Tibial artery (tissue), 4 donors: ENCODE measurements at regions of chr9 and their contacts with region 1.

Region 1: GRCh38 chr9:127199001-127199791 is 65.4 kb upstream of the GARNL3 start:
- DNase-seq: peak; percentile 83 to 89
- H3K4me3 ChIP-seq: no peak overlapping the region
- H3K27ac ChIP-seq: peak overlapping the region; percentile 1 to 8
- H3K4me1 ChIP-seq: peaks cover 0 to 30% (median 19%) of the 10 kb centered on the region in 4 donors
- H3K27me3 ChIP-seq: no peaks in the 10 kb centered on the region
- CTCF ChIP-seq: peak; percentile 88 to 98

Region 2: GRCh38 chr9:126939821-126940221 is 259.4 kb before region 1 on chr9:
- intact Hi-C with region 1: loop called (anchors 2 kb)
- DNase-seq: no peak
- H3K4me3 ChIP-seq: no peak overlapping the region
- H3K27ac ChIP-seq: no peak overlapping the region
- H3K4me1 ChIP-seq: no peaks in the 10 kb centered on the region
- H3K27me3 ChIP-seq: no peaks in the 10 kb centered on the region
- CTCF ChIP-seq: no peak

Region 3: GRCh38 chr9:127116957-127117356 is 82.2 kb before region 1 on chr9:
- intact Hi-C with region 1: loop called (anchors 5 kb)
- DNase-seq: no peak
- H3K4me3 ChIP-seq: no peak overlapping the region
- H3K27ac ChIP-seq: no peak overlapping the region
- H3K4me1 ChIP-seq: peaks cover 0 to 64% (median 24%) of the 10 kb centered on the region in 4 donors
- H3K27me3 ChIP-seq: no peaks in the 10 kb centered on the region
- CTCF ChIP-seq: no peak

Region 4: DNA sequence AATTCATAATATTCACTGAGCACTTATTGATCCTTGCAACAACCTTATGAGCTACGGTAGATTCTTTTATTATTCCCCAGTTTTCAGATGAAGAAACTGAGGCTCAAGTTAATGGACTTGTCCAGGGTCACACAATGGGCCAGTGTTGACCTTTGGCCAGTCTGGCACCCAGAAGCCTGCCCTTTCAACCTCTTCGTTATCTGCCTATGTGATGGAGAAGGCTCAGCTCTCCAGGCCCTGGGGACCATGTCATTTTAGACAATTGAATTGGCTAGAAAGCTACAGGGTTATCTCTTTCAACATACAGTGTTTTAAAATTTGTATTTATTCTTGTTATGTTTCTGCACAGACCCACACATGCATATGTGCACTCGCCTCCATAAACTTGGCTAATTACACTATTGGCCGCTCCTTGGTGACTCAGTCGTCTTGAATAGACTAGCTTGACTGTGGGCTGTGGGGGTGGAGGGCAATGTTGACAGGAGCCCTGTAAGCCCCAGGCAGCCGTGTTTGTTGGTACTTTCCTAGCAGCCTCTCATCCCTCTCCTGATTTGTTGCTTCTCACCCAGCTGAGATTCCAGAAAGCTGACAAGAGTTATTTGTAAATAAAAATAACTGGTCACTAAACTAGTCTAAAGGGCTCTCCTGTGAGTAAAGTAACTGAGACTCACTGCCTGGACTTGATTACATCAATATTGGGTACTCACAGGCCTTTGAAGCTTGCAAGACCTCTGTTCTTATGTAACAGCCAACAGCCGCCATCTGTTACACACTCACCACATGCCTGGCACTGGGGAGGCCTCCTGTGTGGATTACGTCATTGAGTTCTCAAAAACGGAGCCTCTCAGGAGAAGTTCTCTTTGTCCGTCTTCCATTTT is 68.3 kb before region 1 on chr9:
- intact Hi-C with region 1: no loop called
- DNase-seq: peak; percentile 67 to 76
- H3K4me3 ChIP-seq: no peak overlapping the region
- H3K27ac ChIP-seq: peak overlapping the region; percentile 77 to 82
- H3K4me1 ChIP-seq: peaks cover 0 to 83% (median 51%) of the 10 kb centered on the region in 4 donors
- H3K27me3 ChIP-seq: no peaks in the 10 kb centered on the region
- CTCF ChIP-seq: no peak